Natural killer cell (primary cell): ENCODE measurements at regions of chr2 and their contacts with region 1.

Region 1: DNA sequence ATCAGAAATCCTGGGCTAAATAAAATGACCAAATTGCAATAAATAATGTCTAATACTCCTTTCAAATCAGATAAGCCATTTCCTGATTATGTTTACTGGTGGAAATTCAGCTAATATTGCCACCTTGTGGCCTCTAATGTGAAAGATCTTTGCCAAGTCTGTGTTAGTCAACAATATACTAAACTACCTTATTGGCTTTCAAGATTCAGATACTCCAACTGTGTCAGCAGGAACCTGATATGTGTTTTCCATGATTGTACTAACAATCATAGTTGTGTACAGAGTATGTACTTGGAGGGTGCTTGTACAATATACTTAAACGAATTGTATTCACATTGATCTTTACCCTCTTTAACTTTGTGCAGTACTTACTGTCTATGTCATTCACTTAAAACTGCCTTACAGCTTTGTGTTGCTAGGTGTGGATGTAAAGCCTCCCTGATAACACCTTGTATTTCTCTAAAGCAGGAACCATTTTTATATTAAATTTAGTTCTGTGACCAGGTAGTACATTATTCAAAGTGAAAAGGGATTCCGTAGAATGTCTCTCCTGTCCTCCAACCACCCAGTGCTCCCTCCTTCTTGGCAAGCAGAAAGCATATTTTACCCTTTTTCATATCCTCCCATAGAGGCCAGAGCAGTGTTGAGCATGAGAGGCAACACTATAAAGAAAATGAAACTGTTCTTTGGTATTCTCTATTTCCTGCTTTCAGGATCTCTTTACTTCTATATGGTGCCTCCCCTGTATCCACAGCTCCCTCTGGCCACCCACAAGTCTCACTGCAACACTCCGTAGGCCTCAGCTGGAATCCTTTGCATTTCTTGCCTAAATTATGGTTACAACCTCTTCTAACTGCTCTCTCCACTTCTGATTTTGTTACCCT is 75.2 kb upstream of the C2orf15 start:
- DNase-seq: peak in 1 of 2 donors; percentile 77
- ATAC-seq: peak in 1 of 3 donors; percentile 52
- H3K4me3 ChIP-seq: no peak overlapping the region
- H3K4me3 Mint-ChIP-seq: no peak overlapping the region
- H3K27ac ChIP-seq: no peak overlapping the region
- H3K27ac Mint-ChIP-seq: no peak overlapping the region
- H3K4me1 ChIP-seq: no peaks in the 10 kb centered on the region
- H3K4me1 Mint-ChIP-seq: no peaks in the 10 kb centered on the region
- H3K27me3 ChIP-seq: no peaks in the 10 kb centered on the region
- H3K27me3 Mint-ChIP-seq: peaks cover 0 to 3% of the 10 kb centered on the region in 2 donors
- CTCF ChIP-seq: peak; percentile 33

Region 2: GRCh38 chr2:98649135-98649991 is 417.0 kb before region 1 on chr2:
- intact Hi-C with region 1: loop called (anchors 1 kb)
- DNase-seq: peak; percentile 73 to 93
- ATAC-seq: peak; percentile 98 to 99 (median 99)
- H3K4me3 ChIP-seq: no peak overlapping the region
- H3K4me3 Mint-ChIP-seq: peak overlapping the region; percentile 74
- H3K27ac ChIP-seq: peak overlapping the region; percentile 38
- H3K27ac Mint-ChIP-seq: peak overlapping the region; percentile 83 to 90
- H3K4me1 ChIP-seq: peaks cover 28% of the 10 kb centered on the region
- H3K4me1 Mint-ChIP-seq: peaks cover 53 to 54% of the 10 kb centered on the region in 2 donors
- H3K27me3 ChIP-seq: no peaks in the 10 kb centered on the region
- H3K27me3 Mint-ChIP-seq: no peaks in the 10 kb centered on the region
- CTCF ChIP-seq: peak; percentile 98